ENCODE measurements at regions of chr1 and their contacts with region 1.

Region 1: DNA sequence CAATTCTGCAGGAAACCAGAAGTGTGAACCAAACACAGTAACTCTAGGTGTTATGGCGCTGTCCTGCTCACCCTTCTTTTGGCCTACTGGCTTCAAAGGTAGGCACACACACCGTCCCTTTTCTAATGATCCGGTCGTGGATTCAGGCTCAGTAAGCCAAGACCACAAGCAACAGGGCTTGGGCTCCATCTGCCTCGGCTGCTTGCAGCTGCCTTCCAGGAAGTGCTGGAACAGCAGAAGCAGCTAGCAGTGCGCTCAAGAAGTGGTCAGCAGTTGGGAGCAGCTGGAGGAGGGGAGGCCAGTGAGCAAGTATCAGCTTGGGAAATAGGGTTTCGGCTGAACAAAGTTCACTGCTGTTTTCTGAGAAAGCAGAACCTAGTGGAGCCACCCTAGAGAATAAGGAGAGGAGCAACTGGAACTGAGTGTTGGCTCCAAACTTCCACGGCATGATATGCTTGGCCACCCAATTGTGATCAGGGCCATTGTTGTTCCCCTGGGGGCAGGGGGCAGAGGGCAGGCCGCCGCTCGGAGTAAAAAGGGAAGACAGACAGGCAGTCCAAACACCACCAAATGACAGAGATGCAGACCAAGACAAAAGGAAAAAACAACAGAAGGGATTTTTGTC is 173.4 kb downstream of the TOMM20 start:
- DNase-seq: peak; percentile 82 to 93
- H3K4me3 ChIP-seq: no peak overlapping the region
- H3K4me3 Mint-ChIP-seq: peak overlapping the region; percentile 64
- H3K27ac Mint-ChIP-seq: peak overlapping the region; percentile 99
- H3K4me1 ChIP-seq: peaks cover 69% of the 10 kb centered on the region
- H3K4me1 Mint-ChIP-seq: peaks cover 50% of the 10 kb centered on the region
- H3K27me3 ChIP-seq: no peaks in the 10 kb centered on the region
- H3K27me3 Mint-ChIP-seq: no peaks in the 10 kb centered on the region
- CTCF ChIP-seq: peak in 1 of 2 experiments; percentile 20

Region 2: GRCh38 chr1:234638832-234639799 is 316.1 kb before region 1 on chr1:
- CTCF ChIA-PET with region 1: no interaction called
- POLR2A ChIA-PET with region 1: no interaction called
- intact Hi-C with region 1: loop called (anchors 1 kb)
- DNase-seq: peak; percentile 90 to 93
- H3K4me3 ChIP-seq: no peak overlapping the region
- H3K4me3 Mint-ChIP-seq: peak overlapping the region; percentile 59
- H3K27ac Mint-ChIP-seq: peak overlapping the region; percentile 82
- H3K4me1 ChIP-seq: peaks cover 57% of the 10 kb centered on the region
- H3K4me1 Mint-ChIP-seq: peaks cover 42% of the 10 kb centered on the region
- H3K27me3 ChIP-seq: no peaks in the 10 kb centered on the region
- H3K27me3 Mint-ChIP-seq: no peaks in the 10 kb centered on the region
- CTCF ChIP-seq: no peak

Region 3: GRCh38 chr1:234772345-234773147 is 182.7 kb before region 1 on chr1:
- CTCF ChIA-PET with region 1: no interaction called
- POLR2A ChIA-PET with region 1: no interaction called
- intact Hi-C with region 1: loop called (anchors 2 kb)
- DNase-seq: peak; percentile 87 to 95
- H3K4me3 ChIP-seq: no peak overlapping the region
- H3K4me3 Mint-ChIP-seq: peak overlapping the region; percentile 58
- H3K27ac Mint-ChIP-seq: peak overlapping the region; percentile 90
- H3K4me1 ChIP-seq: peaks cover 53% of the 10 kb centered on the region
- H3K4me1 Mint-ChIP-seq: peaks cover 51% of the 10 kb centered on the region
- H3K27me3 ChIP-seq: no peaks in the 10 kb centered on the region
- H3K27me3 Mint-ChIP-seq: no peaks in the 10 kb centered on the region
- CTCF ChIP-seq: no peak

Region 4: DNA sequence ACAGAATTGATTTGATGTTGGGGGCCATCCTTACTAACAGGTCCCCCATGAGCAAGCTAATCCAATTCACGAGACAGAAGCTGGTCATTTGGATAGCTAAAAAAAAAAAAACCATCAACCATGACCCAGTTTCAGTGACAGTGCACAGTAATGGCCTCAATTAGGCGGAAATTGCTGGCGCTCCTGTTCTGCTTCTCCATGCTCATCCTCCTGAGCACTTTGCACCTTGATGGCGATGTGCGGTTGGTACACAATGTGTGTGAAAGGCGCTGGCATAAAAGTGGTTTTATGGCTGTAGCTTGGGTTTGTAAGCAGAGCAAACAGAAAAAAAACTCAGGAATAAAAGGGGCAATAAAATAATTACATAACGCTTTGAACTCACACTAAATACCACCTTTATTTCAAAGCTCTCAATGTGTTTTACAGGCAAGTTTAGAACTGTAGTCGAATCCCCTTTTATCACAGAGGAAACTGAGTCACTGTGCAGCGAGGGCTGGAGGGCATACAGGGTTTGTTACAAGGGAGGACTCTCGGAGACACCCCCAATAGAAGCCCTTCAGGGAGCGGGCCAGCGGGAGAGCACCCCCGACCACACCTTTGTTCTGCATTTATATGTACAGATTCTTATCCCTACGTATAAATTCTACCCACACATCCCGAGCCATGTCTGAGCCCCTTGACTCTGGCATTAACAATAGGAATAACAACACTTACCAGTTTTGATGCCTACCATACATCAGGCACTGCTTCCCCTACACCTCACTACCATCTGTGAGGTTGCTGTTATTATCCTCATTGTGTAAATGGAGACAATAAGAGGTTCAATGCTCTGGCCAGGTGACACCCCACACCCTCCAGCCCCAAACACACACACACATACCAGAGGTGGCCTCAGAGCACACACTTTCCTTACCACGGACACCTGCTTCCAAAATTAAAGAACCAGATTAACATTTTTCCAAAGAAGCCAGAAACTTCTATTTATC is 131.7 kb before region 1 on chr1:
- CTCF ChIA-PET with region 1: no interaction called
- POLR2A ChIA-PET with region 1: interaction called, 3 read pairs
- intact Hi-C with region 1: loop called (anchors 5 kb)
- DNase-seq: peak; percentile 40 to 83
- H3K4me3 ChIP-seq: no peak overlapping the region
- H3K4me3 Mint-ChIP-seq: no peak overlapping the region
- H3K27ac Mint-ChIP-seq: peak overlapping the region; percentile 3
- H3K4me1 ChIP-seq: peaks cover 31% of the 10 kb centered on the region; the same call in 1 of the 2 replicates
- H3K4me1 Mint-ChIP-seq: peaks cover 23% of the 10 kb centered on the region
- H3K27me3 ChIP-seq: no peaks in the 10 kb centered on the region
- H3K27me3 Mint-ChIP-seq: no peaks in the 10 kb centered on the region
- CTCF ChIP-seq: no peak

Region 5: DNA sequence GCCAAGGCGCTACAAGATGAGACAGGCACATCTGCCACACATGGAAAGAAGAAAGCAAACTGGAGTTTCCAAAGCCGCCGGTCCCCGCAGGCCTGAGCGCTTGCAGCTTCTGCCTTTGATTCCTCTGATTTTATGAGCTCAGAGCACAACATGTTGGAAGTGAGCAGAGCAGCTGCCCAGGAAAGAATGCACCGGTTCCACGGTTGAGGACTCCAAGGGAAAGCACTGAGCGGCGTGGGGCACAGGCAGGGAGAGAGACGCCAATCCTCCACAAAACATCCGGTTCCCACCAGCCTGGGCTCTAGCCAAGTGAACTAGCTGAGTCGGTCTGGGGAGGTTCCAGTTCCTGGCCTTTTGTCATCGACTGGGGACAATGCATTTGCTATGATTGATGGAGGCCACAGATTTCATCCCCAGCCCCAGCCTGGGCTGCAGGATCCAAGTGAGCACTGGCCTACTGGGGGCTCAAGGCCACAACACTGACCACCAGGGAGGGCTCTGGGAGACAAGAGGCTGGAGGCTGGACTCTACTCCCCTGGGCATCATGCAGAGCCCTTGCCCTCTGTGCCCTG is 92.2 kb before region 1 on chr1:
- CTCF ChIA-PET with region 1: no interaction called
- POLR2A ChIA-PET with region 1: no interaction called
- intact Hi-C with region 1: no loop called
- DNase-seq: no peak
- H3K4me3 ChIP-seq: no peak overlapping the region
- H3K4me3 Mint-ChIP-seq: no peak overlapping the region
- H3K27ac Mint-ChIP-seq: peak overlapping the region; percentile 13
- H3K4me1 ChIP-seq: peaks cover 28% of the 10 kb centered on the region
- H3K4me1 Mint-ChIP-seq: peaks cover 31% of the 10 kb centered on the region
- H3K27me3 ChIP-seq: no peaks in the 10 kb centered on the region
- H3K27me3 Mint-ChIP-seq: no peaks in the 10 kb centered on the region
- CTCF ChIP-seq: no peak

Region 6: DNA sequence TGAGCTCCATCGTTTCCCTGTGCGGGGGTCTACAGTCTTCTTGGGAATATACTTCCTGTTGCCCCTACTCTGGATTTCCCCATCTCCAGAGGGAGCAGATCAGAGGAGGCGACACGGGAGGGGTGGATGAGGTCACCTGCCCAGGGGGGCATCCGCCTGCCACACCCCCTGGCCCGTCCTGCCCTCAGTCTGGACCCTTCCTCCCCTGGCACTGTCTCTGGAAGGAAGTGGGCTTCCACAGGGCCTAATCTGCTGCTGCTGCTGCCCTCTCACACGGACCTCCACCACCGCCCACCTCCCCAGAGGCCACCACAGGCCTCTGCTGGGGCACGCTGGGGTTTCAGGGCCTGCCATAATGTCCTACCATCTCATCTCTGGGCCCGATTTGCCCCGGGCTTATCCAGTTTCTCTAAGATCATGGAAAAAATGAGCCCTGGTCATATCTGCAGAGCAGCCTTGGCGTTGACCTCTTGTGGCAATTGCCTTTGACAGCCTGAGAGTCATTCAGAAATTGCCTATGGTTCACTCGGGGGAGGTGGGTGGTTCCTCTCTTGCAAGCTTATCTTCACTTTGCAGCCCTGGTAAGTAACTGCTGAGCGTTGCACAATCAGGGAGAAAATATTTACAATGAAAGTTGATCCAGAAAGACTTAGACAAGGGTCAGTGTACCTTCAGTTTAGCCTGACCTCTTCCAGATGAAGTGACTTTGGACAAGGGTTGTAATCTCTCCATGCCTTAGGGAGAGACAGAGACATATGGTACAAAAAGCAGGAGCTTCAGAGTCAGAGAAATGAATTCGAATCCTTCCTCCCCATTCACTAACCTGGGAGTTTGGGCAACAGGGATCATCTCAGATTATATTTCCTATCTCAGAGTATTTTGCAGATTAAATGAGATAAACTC is 79.0 kb before region 1 on chr1:
- CTCF ChIA-PET with region 1: interaction called, 3 read pairs
- POLR2A ChIA-PET with region 1: no interaction called
- intact Hi-C with region 1: loop called (anchors 1 kb)
- DNase-seq: peak; percentile 84 to 87
- H3K4me3 ChIP-seq: no peak overlapping the region
- H3K4me3 Mint-ChIP-seq: no peak overlapping the region
- H3K27ac Mint-ChIP-seq: peak overlapping the region; percentile 58
- H3K4me1 ChIP-seq: peaks cover 44% of the 10 kb centered on the region
- H3K4me1 Mint-ChIP-seq: peaks cover 35% of the 10 kb centered on the region
- H3K27me3 ChIP-seq: no peaks in the 10 kb centered on the region
- H3K27me3 Mint-ChIP-seq: no peaks in the 10 kb centered on the region
- CTCF ChIP-seq: no peak

Region 7: GRCh38 chr1:234925440-234926263 is 29.6 kb before region 1 on chr1:
- CTCF ChIA-PET with region 1: no interaction called
- POLR2A ChIA-PET with region 1: interaction called, 10 read pairs
- intact Hi-C with region 1: no loop called
- DNase-seq: peak; percentile 61 to 66
- H3K4me3 ChIP-seq: no peak overlapping the region
- H3K4me3 Mint-ChIP-seq: peak overlapping the region; percentile 45
- H3K27ac Mint-ChIP-seq: peak overlapping the region; percentile 93
- H3K4me1 ChIP-seq: peaks cover 32% of the 10 kb centered on the region
- H3K4me1 Mint-ChIP-seq: peaks cover 36% of the 10 kb centered on the region
- H3K27me3 ChIP-seq: no peaks in the 10 kb centered on the region
- H3K27me3 Mint-ChIP-seq: no peaks in the 10 kb centered on the region
- CTCF ChIP-seq: no peak

Region 8: GRCh38 chr1:234970731-234971476 is 15.7 kb after region 1 on chr1:
- CTCF ChIA-PET with region 1: interaction called, 8 read pairs
- POLR2A ChIA-PET with region 1: interaction called, 14 read pairs
- intact Hi-C with region 1: no loop called
- DNase-seq: peak; percentile 73 to 78
- H3K4me3 ChIP-seq: no peak overlapping the region
- H3K4me3 Mint-ChIP-seq: peak overlapping the region; percentile 72
- H3K27ac Mint-ChIP-seq: peak overlapping the region; percentile 94
- H3K4me1 ChIP-seq: peaks cover 64% of the 10 kb centered on the region
- H3K4me1 Mint-ChIP-seq: peaks cover 60% of the 10 kb centered on the region
- H3K27me3 ChIP-seq: no peaks in the 10 kb centered on the region
- H3K27me3 Mint-ChIP-seq: no peaks in the 10 kb centered on the region
- CTCF ChIP-seq: no peak

Region 9: GRCh38 chr1:235030919-235031596 is 75.8 kb after region 1 on chr1:
- CTCF ChIA-PET with region 1: no interaction called
- POLR2A ChIA-PET with region 1: no interaction called
- intact Hi-C with region 1: no loop called
- DNase-seq: no peak
- H3K4me3 ChIP-seq: no peak overlapping the region
- H3K4me3 Mint-ChIP-seq: no peak overlapping the region
- H3K27ac Mint-ChIP-seq: no peak overlapping the region
- H3K4me1 ChIP-seq: peaks cover 14% of the 10 kb centered on the region
- H3K4me1 Mint-ChIP-seq: peaks cover 7% of the 10 kb centered on the region
- H3K27me3 ChIP-seq: no peaks in the 10 kb centered on the region
- H3K27me3 Mint-ChIP-seq: no peaks in the 10 kb centered on the region
- CTCF ChIP-seq: no peak